ENCODE measurements at regions of chr7 and their contacts with region 1.

Region 1: GRCh38 chr7:77536413-77537135 is 521 bp upstream of the PTPN12 start:
- DNase-seq: peak; percentile 97
- H3K4me3 ChIP-seq: peak overlapping the region; percentile 49 to 98 (median 71)
- H3K27ac ChIP-seq: peak overlapping the region; percentile 79
- H3K4me1 ChIP-seq: peaks cover 29% of the 10 kb centered on the region
- H3K27me3 ChIP-seq: no peaks in the 10 kb centered on the region
- CTCF ChIP-seq: no peak

Region 2: GRCh38 chr7:77393269-77393668 is 143.3 kb before region 1 on chr7:
- CTCF ChIA-PET with region 1: no interaction called
- dilution Hi-C with region 1: no loop called
- in situ Hi-C with region 1: no loop called
- intact Hi-C with region 1: loop called (anchors 5 kb)
- DNase-seq: peak; percentile 100
- H3K4me3 ChIP-seq: no peak overlapping the region
- H3K27ac ChIP-seq: peak overlapping the region; percentile 90
- H3K4me1 ChIP-seq: peaks cover 22% of the 10 kb centered on the region
- H3K27me3 ChIP-seq: no peaks in the 10 kb centered on the region
- CTCF ChIP-seq: no peak

Region 3: DNA sequence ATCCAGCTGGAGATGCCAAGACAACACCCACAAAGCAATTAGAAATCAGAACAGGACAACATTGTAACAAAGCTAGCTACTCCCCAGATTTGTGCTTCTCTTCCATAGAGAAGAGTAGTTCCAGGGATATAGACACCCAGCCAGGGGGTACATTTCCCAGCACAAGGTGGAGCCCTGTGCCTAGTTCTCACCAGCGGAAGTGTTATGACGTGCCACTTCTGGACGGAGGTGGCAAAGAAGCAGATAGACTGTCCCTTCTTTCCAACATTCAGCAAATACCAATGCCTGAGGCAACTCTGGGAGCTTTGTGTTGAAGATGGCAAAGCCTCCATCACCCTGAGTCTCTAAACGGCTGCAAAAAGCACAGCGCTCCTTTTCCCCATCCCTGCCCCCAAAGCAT is 97.0 kb before region 1 on chr7:
- CTCF ChIA-PET with region 1: interaction called, 4 read pairs
- dilution Hi-C with region 1: no loop called
- in situ Hi-C with region 1: no loop called
- intact Hi-C with region 1: loop called (anchors 1 kb)
- DNase-seq: peak; percentile 56
- H3K4me3 ChIP-seq: no peak overlapping the region
- H3K27ac ChIP-seq: no peak overlapping the region
- H3K4me1 ChIP-seq: peaks cover 32% of the 10 kb centered on the region
- H3K27me3 ChIP-seq: no peaks in the 10 kb centered on the region
- CTCF ChIP-seq: peak; percentile 55 to 74

Region 4: DNA sequence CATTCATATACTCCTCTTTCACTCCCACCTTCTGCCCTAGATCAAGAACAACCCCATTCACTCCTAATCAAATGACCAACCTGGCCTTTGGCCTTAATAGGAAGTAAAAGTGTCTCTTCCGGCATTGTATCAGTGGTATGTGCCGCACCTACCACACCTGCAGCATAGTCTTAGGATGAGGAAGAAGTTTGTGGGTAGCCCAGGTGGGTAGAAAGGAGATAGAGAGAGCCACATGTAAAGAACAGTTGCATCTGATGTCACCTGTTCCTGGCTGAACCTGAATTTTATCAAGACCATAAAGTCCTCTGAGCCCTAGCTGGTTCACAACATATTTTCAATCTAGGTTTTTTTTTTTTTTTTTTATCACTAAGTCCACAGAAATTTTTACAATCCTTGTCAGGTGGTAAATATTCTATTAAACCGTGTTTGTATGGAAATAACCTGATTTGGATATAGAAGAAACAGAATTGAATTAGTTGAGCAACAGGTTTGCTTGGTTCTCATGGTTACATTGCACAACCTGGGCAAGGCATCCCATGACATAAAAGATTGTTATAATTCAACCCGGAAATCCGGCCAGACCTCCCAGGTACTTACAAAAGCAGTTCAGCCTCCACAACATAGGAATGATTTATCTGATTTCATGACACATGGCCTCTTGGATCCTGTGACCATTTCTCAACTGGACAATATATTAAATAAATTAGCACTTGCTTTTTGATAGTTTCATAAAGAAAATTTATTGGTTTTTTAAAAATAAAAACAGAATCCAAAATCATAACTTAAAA is 54.8 kb before region 1 on chr7:
- CTCF ChIA-PET with region 1: no interaction called
- dilution Hi-C with region 1: no loop called
- in situ Hi-C with region 1: no loop called
- intact Hi-C with region 1: loop called (anchors 5 kb)
- DNase-seq: peak; percentile 85
- H3K4me3 ChIP-seq: no peak overlapping the region
- H3K27ac ChIP-seq: peak overlapping the region; percentile 58
- H3K4me1 ChIP-seq: peaks cover 5% of the 10 kb centered on the region
- H3K27me3 ChIP-seq: no peaks in the 10 kb centered on the region
- CTCF ChIP-seq: no peak

Region 5: GRCh38 chr7:77525231-77525630 is 11.3 kb before region 1 on chr7:
- CTCF ChIA-PET with region 1: no interaction called
- dilution Hi-C with region 1: no loop called
- in situ Hi-C with region 1: no loop called
- intact Hi-C with region 1: loop called (anchors 1 kb)
- DNase-seq: peak; percentile 76
- H3K4me3 ChIP-seq: no peak overlapping the region
- H3K27ac ChIP-seq: peak overlapping the region; percentile 27
- H3K4me1 ChIP-seq: peaks cover 18% of the 10 kb centered on the region
- H3K27me3 ChIP-seq: no peaks in the 10 kb centered on the region
- CTCF ChIP-seq: no peak

Region 6: DNA sequence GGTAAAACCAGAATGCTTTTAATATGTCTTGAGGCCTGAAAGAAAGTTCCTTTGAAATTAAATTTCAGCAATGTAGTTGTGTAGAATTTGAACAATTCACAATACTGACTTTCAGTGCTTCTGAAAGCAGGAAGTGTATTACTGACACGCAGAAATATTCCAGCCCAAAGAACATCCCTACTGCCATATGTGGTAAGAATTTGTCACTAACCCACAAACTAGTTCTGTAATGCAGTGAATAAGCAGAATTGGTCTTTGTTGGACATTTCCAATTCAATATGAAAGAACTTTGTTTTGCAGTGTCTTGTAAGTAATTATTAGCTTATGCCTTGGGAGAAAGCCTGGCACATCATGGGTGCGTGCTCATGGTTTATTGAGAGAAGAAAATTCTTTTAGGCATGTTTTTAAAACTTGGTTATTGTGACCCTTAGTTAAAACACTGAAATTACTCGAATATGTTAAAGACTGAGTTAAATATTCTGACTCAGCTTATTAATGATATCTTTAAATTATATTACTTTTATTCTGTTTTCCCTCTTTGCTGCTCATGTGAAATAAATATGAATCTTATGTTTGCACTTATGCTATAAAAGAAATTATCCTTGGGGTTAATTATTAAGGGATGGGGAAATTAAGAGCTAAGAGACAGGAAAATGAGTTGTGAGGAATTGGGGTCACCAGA is 33.9 kb after region 1 on chr7:
- CTCF ChIA-PET with region 1: no interaction called
- dilution Hi-C with region 1: no loop called
- in situ Hi-C with region 1: no loop called
- intact Hi-C with region 1: loop called (anchors 2 kb)
- DNase-seq: peak; percentile 57
- H3K4me3 ChIP-seq: no peak overlapping the region
- H3K27ac ChIP-seq: peak overlapping the region; percentile 33
- H3K4me1 ChIP-seq: peaks cover 25% of the 10 kb centered on the region
- H3K27me3 ChIP-seq: no peaks in the 10 kb centered on the region
- CTCF ChIP-seq: no peak

Region 7: GRCh38 chr7:77600952-77601351 is 64.4 kb after region 1 on chr7:
- CTCF ChIA-PET with region 1: no interaction called
- dilution Hi-C with region 1: no loop called
- in situ Hi-C with region 1: no loop called
- intact Hi-C with region 1: loop called (anchors 5 kb)
- DNase-seq: no peak
- H3K4me3 ChIP-seq: no peak overlapping the region
- H3K27ac ChIP-seq: no peak overlapping the region
- H3K4me1 ChIP-seq: no peaks in the 10 kb centered on the region
- H3K27me3 ChIP-seq: no peaks in the 10 kb centered on the region
- CTCF ChIP-seq: no peak